HepG2 (cell line): ENCODE measurements at regions of chr20 and their contacts with region 1.

Region 1: GRCh38 chr20:62523473-62524203 is 47.8 kb upstream of the GATA5 start:
- DNase-seq: peak; percentile 80
- ATAC-seq: peak; percentile 88
- H3K4me3 ChIP-seq: peak overlapping the region in 1 of 3 experiments; percentile 10; a peak in 1 of 6 replicates
- H3K27ac ChIP-seq: no peak overlapping the region
- H3K4me1 ChIP-seq: peaks cover 21% of the 10 kb centered on the region
- H3K27me3 ChIP-seq: peaks cover 29 to 74% of the 10 kb centered on the region in 2 experiments; a peak in 4 of 5 replicates
- CTCF ChIP-seq: no peak
- EP300 ChIP-seq: no peak; a peak in 1 of 4 replicates
- POLR2A ChIP-seq: no peak
- RAD21 ChIP-seq: no peak

Region 2: GRCh38 chr20:62583420-62583920 is 59.8 kb after region 1 on chr20:
- CTCF ChIA-PET with region 1: no interaction called
- POLR2A ChIA-PET with region 1: no interaction called
- in situ Hi-C with region 1: no loop called
- intact Hi-C with region 1: loop called (anchors 5 kb)
- DNase-seq: no peak
- ATAC-seq: no peak
- H3K4me3 ChIP-seq: no peak overlapping the region
- H3K27ac ChIP-seq: no peak overlapping the region
- H3K4me1 ChIP-seq: no peaks in the 10 kb centered on the region
- H3K27me3 ChIP-seq: peaks cover 15 to 93% of the 10 kb centered on the region in 2 experiments
- CTCF ChIP-seq: peak; percentile 44
- EP300 ChIP-seq: no peak
- POLR2A ChIP-seq: no peak
- RAD21 ChIP-seq: no peak

Region 3: GRCh38 chr20:62642040-62642665 is 118.5 kb after region 1 on chr20 and contains the start of gene SLCO4A1:
- CTCF ChIA-PET with region 1: no interaction called
- POLR2A ChIA-PET with region 1: no interaction called
- in situ Hi-C with region 1: no loop called
- intact Hi-C with region 1: no loop called
- DNase-seq: peak; percentile 59
- ATAC-seq: peak; percentile 71
- H3K4me3 ChIP-seq: peak within 1 kb of the TSS; percentile 67 to 86 (median 72)
- H3K27ac ChIP-seq: peak within 1 kb of the TSS; percentile 9
- H3K4me1 ChIP-seq: peaks cover 87% of the 10 kb centered on the region
- H3K27me3 ChIP-seq: peaks cover 11 to 13% of the 10 kb centered on the region in 2 experiments
- CTCF ChIP-seq: peak; percentile 53; the same call in 1 of the 2 replicates
- EP300 ChIP-seq: peak in 1 of 2 experiments; percentile 35; a peak in 1 of 4 replicates
- POLR2A ChIP-seq: peak; percentile 32 to 94; a peak in 2 of 4 replicates
- RAD21 ChIP-seq: no peak; the same call in none of the 2 replicates
- total RNA-seq, gene SLCO4A1: 23.8 and 55.5 TPM in 2 replicates